Activated T-helper 2 cell treated with anti-CD3 and anti-CD28 coated beads, Interferon-gamma antibody, Interleukin-2, Interleukin-4, amounts not matched to agents 10 μg/mL and 5 μg/mL and 100 μg/mL, durations not matched to agents 14 hours and 24 hours and 36 hours (primary cell): ENCODE measurements at regions of chr2 and their contacts with region 1.

Region 1: GRCh38 chr2:235116885-235117492 is 165.2 kb downstream of the SH3BP4 start:
- DNase-seq: no peak
- H3K4me3 Mint-ChIP-seq: no peak overlapping the region
- H3K27ac Mint-ChIP-seq: no peak overlapping the region
- H3K4me1 Mint-ChIP-seq: no peaks in the 10 kb centered on the region
- H3K27me3 Mint-ChIP-seq: peaks cover 3% of the 10 kb centered on the region

Region 2: DNA sequence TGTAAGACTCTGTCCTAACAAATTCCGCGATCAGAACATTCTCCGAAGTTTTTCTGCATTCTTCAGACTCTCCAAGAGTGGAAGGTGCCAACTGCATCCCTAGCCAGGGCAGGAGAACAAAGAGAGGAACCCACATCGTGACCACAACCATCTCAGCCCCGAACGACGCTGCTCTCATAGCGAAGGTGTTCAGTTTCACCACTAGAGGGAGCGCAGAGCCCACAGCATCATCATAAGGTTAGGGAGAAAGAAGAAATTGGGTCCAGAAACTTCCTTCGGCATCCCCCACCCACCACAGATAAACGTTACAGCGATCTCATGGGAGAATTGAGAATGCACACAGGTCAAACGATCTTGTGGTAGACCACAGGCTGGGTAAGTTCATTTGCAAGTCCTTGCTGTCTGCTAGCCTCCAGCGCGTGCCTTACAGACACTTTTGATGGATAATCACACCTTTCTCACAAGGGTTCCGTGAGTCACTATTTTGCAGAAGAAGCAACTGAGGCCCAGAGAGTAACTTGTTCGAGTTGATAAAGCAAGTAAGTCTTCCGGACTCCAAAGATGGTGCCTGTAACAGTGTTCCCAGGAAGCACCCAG is 566.4 kb before region 1 on chr2:
- intact Hi-C with region 1: loop called (anchors 1 kb)
- DNase-seq: peak; percentile 36
- H3K4me3 Mint-ChIP-seq: no peak overlapping the region
- H3K27ac Mint-ChIP-seq: no peak overlapping the region
- H3K4me1 Mint-ChIP-seq: peaks cover 3% of the 10 kb centered on the region
- H3K27me3 Mint-ChIP-seq: peaks cover 32% of the 10 kb centered on the region